OCI-LY7 (cell line): ENCODE measurements at regions of chr1 and their contacts with region 1.

Region 1: GRCh38 chr1:167171286-167171929 is 49.3 kb upstream of the POU2F1 start:
- DNase-seq: no peak
- H3K4me3 ChIP-seq: no peak overlapping the region
- H3K27ac ChIP-seq: no peak overlapping the region
- H3K4me1 ChIP-seq: no peaks in the 10 kb centered on the region
- CTCF ChIP-seq: no peak

Region 2: DNA sequence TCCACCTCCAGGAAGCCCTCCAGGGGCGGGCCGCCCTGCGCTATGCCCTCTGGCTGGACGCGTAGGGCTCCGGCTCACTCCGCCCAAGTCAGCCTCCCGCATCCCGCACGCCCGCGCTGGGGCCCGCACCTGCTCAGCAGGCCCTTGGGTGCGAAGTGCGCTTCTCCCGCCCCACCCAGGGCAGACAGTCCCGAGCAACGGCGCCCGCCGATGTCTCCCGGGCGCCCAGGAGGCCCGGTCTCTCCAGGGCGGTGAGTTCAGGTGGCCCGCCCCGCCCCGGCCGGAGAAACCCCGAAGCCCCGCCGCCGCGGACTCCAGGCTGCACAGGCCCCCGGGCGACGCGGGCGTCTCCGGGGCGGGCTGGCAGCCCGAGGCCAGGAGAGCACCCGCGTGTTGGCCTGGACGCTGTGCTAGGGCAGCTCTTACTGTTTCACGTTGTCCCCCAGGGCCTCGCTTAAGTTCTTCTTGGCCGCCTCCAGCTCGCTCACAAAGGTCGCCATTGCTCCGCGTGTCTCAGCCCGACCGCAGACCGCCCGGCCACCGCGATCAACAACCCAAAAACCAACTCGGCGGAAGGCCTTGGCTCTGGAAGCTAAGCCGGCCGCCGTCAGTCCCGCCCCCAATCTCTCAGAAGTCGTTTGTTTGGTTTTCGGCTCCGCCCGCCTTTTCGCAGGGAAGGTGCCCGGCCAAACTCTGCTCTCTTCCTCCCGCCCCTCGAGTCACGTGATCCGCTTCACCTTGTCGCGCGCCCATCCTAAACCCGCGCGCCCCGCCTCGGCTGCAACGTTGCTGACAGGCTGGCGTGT is 295.5 kb before region 1 on chr1 and contains the start of gene TADA1:
- CTCF ChIA-PET with region 1: no interaction called
- POLR2A ChIA-PET with region 1: no interaction called
- intact Hi-C with region 1: no loop called
- DNase-seq: peak; percentile 99
- H3K4me3 ChIP-seq: peak within 1 kb of the TSS; percentile 86
- H3K27ac ChIP-seq: peak within 1 kb of the TSS; percentile 69
- H3K4me1 ChIP-seq: peaks cover 17% of the 10 kb centered on the region
- CTCF ChIP-seq: no peak
- total RNA-seq, gene TADA1: 14.9 and 16.9 TPM in 2 replicates

Region 3: GRCh38 chr1:166980818-166981217 is 190.6 kb before region 1 on chr1:
- CTCF ChIA-PET with region 1: no interaction called
- POLR2A ChIA-PET with region 1: no interaction called
- intact Hi-C with region 1: no loop called
- DNase-seq: no peak
- H3K4me3 ChIP-seq: no peak overlapping the region
- H3K27ac ChIP-seq: no peak overlapping the region
- H3K4me1 ChIP-seq: peaks cover 6% of the 10 kb centered on the region
- CTCF ChIP-seq: no peak

Region 4: GRCh38 chr1:167043752-167044488 is 127.5 kb before region 1 on chr1:
- CTCF ChIA-PET with region 1: no interaction called
- POLR2A ChIA-PET with region 1: no interaction called
- intact Hi-C with region 1: no loop called
- DNase-seq: peak; percentile 81
- H3K4me3 ChIP-seq: peak overlapping the region; percentile 54
- H3K27ac ChIP-seq: peak overlapping the region; percentile 6
- H3K4me1 ChIP-seq: peaks cover 16% of the 10 kb centered on the region
- CTCF ChIP-seq: no peak

Region 5: GRCh38 chr1:167229719-167230385 is 58.4 kb after region 1 on chr1:
- CTCF ChIA-PET with region 1: no interaction called
- POLR2A ChIA-PET with region 1: no interaction called
- intact Hi-C with region 1: loop called (anchors 10 kb)
- DNase-seq: no peak
- H3K4me3 ChIP-seq: no peak overlapping the region
- H3K27ac ChIP-seq: no peak overlapping the region
- H3K4me1 ChIP-seq: peaks cover 1% of the 10 kb centered on the region
- CTCF ChIP-seq: no peak